Dendritic cell treated with granulocyte-macrophage colony-stimulating factor and Interleukin-4, amounts not matched to agents 40 ng/mL and 50 ng/mL, for 4 days (primary cell): ENCODE measurements at regions of chr7 and their contacts with region 1.

Region 1: GRCh38 chr7:24979863-24980533 is at the start of gene OSBPL3:
- H3K4me3 Mint-ChIP-seq: peak within 1 kb of the TSS; percentile 99
- H3K27ac Mint-ChIP-seq: peak within 1 kb of the TSS; percentile 100
- H3K4me1 Mint-ChIP-seq: peaks cover 72% of the 10 kb centered on the region
- H3K27me3 Mint-ChIP-seq: peaks cover 19% of the 10 kb centered on the region

Region 2: GRCh38 chr7:24819916-24820689 is 159.9 kb before region 1 on chr7:
- intact Hi-C with region 1: loop called (anchors 2 kb)
- H3K4me3 Mint-ChIP-seq: peak overlapping the region; percentile 10
- H3K27ac Mint-ChIP-seq: peak overlapping the region; percentile 50
- H3K4me1 Mint-ChIP-seq: peaks cover 25% of the 10 kb centered on the region
- H3K27me3 Mint-ChIP-seq: no peaks in the 10 kb centered on the region

Region 3: DNA sequence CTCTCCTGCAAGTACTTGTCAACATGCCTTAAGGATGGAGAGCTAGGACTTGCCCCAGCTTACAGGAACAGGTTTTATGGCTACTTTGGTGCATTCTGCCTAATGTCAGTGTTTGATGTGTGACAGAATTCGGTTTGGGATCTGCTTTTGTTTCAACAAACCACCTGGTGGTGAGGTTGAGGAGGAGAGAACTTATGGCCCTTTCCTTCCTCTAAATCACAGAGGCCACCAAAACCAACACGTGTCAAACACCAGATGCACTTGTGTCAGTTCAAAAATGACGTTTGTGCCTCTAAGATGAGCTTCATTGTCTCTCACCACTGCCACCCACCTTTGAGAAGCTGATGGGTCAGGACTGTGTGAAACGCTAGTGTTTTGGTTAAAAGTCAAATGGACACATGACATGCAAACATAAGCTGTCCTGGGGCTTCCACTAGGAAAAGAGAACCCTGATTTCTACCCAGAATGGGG is 83.9 kb before region 1 on chr7:
- intact Hi-C with region 1: loop called (anchors 2 kb)
- H3K4me3 Mint-ChIP-seq: no peak overlapping the region
- H3K27ac Mint-ChIP-seq: peak overlapping the region; percentile 32
- H3K4me1 Mint-ChIP-seq: peaks cover 55% of the 10 kb centered on the region
- H3K27me3 Mint-ChIP-seq: no peaks in the 10 kb centered on the region

Region 4: DNA sequence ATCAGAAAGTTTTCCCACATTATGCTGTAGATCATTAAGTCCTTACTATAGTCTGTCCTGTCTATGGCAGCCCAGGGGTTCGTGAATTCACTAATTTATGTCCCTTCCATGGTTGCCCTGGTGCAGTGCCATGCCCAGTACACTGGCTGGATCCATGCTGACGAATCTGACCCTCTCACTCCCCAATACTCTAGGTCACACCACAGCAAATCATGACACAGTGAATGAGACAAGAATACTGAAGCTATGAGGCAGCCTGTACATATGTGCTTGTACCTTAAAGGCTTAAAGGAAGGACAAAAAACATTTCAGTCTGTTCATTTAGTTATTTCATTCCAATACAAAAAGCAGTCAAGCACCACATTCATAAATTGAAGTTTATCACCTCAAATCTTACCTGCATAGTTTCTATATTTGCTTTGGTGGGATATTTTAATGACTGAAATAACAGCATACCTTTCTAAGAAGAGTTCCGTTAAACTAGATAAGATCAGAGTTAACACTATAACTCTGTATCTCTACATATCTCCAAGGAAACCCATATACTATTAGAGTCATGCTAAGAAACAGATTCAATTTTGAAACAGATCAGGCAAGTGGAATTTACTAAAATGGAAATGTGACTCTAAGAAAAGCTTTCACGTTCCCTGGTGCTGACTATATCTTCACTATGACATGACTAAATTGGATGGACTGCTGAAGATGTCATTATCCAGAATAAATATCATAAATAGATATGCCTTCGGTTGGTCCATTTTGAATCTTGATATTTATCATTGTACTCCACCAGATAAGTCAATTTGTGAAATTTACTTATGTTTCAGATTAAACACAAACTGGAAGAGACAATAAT is 36.7 kb before region 1 on chr7:
- intact Hi-C with region 1: loop called (anchors 5 kb)
- H3K4me3 Mint-ChIP-seq: no peak overlapping the region
- H3K27ac Mint-ChIP-seq: no peak overlapping the region
- H3K4me1 Mint-ChIP-seq: peaks cover 50% of the 10 kb centered on the region
- H3K27me3 Mint-ChIP-seq: no peaks in the 10 kb centered on the region

Region 5: GRCh38 chr7:24956021-24956420 is 24.0 kb before region 1 on chr7:
- intact Hi-C with region 1: no loop called
- H3K4me3 Mint-ChIP-seq: no peak overlapping the region
- H3K27ac Mint-ChIP-seq: no peak overlapping the region
- H3K4me1 Mint-ChIP-seq: peaks cover 50% of the 10 kb centered on the region
- H3K27me3 Mint-ChIP-seq: no peaks in the 10 kb centered on the region

Region 6: GRCh38 chr7:25069900-25070443 is 90.0 kb after region 1 on chr7:
- intact Hi-C with region 1: loop called (anchors 5 kb)
- H3K4me3 Mint-ChIP-seq: no peak overlapping the region
- H3K27ac Mint-ChIP-seq: no peak overlapping the region
- H3K4me1 Mint-ChIP-seq: peaks cover 13% of the 10 kb centered on the region
- H3K27me3 Mint-ChIP-seq: peaks cover 11% of the 10 kb centered on the region